ENCODE measurements at regions of chr13 and their contacts with region 1.

Region 1: GRCh38 chr13:86918682-86919081 is 752.5 kb upstream of the SLITRK5 start:
- DNase-seq: no peak

Region 2: GRCh38 chr13:86906127-86906874 is 12.4 kb before region 1 on chr13:
- intact Hi-C with region 1: loop called (anchors 1 kb)
- DNase-seq: no peak

Measured in cardiac septum (tissue), 1 donor.